Heart right ventricle (tissue), 16 donors: ENCODE measurements at regions of chr1 and their contacts with region 1.

Region 1: GRCh38 chr1:210571356-210572284 is 242.9 kb downstream of the HHAT start:
- DNase-seq: no peak
- ATAC-seq: no peak
- H3K4me3 ChIP-seq: no peak overlapping the region
- H3K27ac ChIP-seq: no peak overlapping the region
- H3K4me1 ChIP-seq: no peaks in the 10 kb centered on the region
- H3K27me3 ChIP-seq: no peaks in the 10 kb centered on the region
- CTCF ChIP-seq: no peak

Region 2: DNA sequence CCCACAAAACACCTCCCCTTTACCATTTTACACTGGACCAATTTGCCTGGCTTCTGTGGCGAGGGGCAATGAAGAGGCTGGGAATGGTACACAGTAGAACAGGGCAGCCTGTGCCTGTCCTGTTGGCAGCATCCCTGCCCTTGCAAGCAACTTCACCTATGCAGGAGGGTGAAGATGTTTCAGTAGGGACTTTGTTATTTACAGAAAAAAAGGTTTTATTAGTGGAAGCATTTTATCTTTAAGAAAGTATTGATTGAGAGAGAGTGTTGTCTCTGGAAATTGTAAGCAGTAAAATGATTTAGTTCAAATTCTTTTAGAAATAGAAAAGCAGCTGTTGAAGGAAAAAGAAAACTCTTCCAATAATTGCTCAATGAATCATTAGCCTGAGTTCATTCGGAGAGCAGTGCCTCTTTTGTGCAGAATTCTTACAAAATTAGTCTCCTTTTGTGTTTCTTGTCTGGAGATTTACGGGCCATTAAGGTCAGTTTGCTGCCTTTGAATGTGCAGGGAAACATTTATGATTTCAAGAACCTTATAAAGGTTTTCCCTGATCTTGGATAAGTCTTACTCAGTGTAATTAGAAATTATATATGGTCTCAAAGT is 193.8 kb before region 1 on chr1:
- intact Hi-C with region 1: no loop called
- DNase-seq: no peak
- ATAC-seq: no peak
- H3K4me3 ChIP-seq: no peak overlapping the region
- H3K27ac ChIP-seq: peak overlapping the region in 1 of 10 donors; percentile 8
- H3K4me1 ChIP-seq: peaks cover 0 to 13% (median 0%) of the 10 kb centered on the region in 9 donors
- H3K27me3 ChIP-seq: no peaks in the 10 kb centered on the region
- CTCF ChIP-seq: no peak

Region 3: GRCh38 chr1:210944252-210944651 is 372.6 kb after region 1 on chr1:
- intact Hi-C with region 1: loop called in 1 of 10 experiments (anchors 10 kb)
- DNase-seq: no peak
- ATAC-seq: no peak
- H3K4me3 ChIP-seq: no peak overlapping the region
- H3K27ac ChIP-seq: no peak overlapping the region
- H3K4me1 ChIP-seq: no peaks in the 10 kb centered on the region
- H3K27me3 ChIP-seq: peaks cover 0 to 5% (median 0%) of the 10 kb centered on the region in 7 donors
- CTCF ChIP-seq: no peak